Heart left ventricle (tissue), 16 donors: ENCODE measurements at regions of chr18 and their contacts with region 1.

Region 1: GRCh38 chr18:36872329-36872728 is 43.4 kb downstream of the KIAA1328 start:
- DNase-seq: no peak
- ATAC-seq: no peak
- H3K4me3 ChIP-seq: no peak overlapping the region
- H3K27ac ChIP-seq: no peak overlapping the region
- H3K4me1 ChIP-seq: no peaks in the 10 kb centered on the region
- H3K27me3 ChIP-seq: no peaks in the 10 kb centered on the region
- CTCF ChIP-seq: no peak
- POLR2A ChIP-seq: no peak

Region 2: DNA sequence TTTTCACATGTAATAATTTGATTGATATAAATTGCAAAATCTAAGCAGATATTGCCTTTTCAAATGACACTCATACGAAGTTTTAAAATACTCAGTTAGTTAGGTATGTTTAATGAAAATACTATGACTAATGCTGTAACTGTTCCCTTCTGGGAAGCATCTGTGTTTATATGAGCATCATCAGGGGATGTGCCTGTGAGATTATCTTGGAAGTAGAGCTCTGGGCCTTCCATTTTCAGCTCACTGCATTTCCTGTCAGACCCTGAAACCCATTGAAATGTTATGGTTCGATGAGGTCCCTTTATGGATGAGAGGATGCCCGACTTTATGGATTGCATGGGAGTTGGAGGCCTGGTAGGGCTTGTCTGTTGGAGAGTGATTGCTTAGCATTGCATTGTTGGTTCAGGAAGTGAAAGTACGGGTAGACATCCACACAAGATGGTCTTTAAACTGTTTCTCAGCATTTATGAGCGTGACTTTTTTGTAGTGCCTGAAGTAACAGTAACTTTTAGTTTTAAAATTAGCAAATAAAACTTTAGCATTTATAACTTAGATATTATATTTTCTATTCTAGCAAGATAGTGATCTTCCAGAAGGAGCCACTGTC is 714.0 kb before region 1 on chr18:
- intact Hi-C with region 1: no loop called
- DNase-seq: no peak
- ATAC-seq: no peak
- H3K4me3 ChIP-seq: no peak overlapping the region
- H3K27ac ChIP-seq: no peak overlapping the region
- H3K4me1 ChIP-seq: peaks cover 0 to 4% (median 0%) of the 10 kb centered on the region in 12 donors
- H3K27me3 ChIP-seq: no peaks in the 10 kb centered on the region
- CTCF ChIP-seq: no peak
- POLR2A ChIP-seq: no peak

Region 3: GRCh38 chr18:36934884-36935283 is 62.6 kb after region 1 on chr18:
- intact Hi-C with region 1: loop called in 1 of 10 experiments (anchors 10 kb)
- DNase-seq: no peak
- ATAC-seq: peak; percentile 51 to 92 (median 82)
- H3K4me3 ChIP-seq: no peak overlapping the region
- H3K27ac ChIP-seq: no peak overlapping the region
- H3K4me1 ChIP-seq: peaks cover 0 to 12% (median 2%) of the 10 kb centered on the region in 12 donors
- H3K27me3 ChIP-seq: no peaks in the 10 kb centered on the region
- CTCF ChIP-seq: no peak
- POLR2A ChIP-seq: no peak